Posterior cingulate gyrus (tissue), 11 donors: ENCODE measurements at regions of chr12 and their contacts with region 1.

Region 1: DNA sequence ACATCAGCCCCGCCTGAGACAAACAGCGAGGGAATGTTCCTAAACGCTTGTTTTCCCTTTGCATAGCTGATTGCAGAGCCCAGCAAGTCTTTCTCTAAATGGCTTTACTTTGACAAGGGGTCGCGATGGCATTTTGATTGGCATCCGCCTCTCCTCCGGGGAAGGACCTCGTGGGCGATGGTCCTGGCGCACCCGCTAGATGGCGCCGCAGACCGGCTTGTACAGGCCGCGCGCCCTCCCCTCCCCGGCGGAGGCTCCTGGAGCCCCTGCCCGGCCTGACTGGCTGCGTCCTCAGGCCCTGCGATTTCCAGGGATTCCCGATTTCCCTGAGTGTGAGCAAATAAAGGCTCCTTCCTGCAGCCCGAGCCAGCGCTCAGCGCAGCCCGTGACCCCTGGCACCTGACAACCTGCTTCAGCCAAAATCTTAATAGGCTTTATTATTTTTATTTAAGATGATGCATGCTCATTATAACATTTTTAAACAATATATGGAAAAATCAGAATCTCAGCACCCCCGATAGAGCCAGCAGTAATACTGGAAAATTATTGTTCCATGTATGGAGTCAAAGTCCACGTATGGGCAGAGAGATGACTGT is 468.3 kb downstream of the AACS start:
- DNase-seq: peak; percentile 47 to 97 (median 77)

Region 2: GRCh38 chr12:125183187-125184067 is 350.1 kb before region 1 on chr12:
- intact Hi-C with region 1: loop called (anchors 10 kb)
- DNase-seq: peak; percentile 89 to 99 (median 92)

Region 3: GRCh38 chr12:125455556-125455955 is 78.0 kb before region 1 on chr12:
- intact Hi-C with region 1: loop called (anchors 2 kb)
- DNase-seq: no peak

Region 4: DNA sequence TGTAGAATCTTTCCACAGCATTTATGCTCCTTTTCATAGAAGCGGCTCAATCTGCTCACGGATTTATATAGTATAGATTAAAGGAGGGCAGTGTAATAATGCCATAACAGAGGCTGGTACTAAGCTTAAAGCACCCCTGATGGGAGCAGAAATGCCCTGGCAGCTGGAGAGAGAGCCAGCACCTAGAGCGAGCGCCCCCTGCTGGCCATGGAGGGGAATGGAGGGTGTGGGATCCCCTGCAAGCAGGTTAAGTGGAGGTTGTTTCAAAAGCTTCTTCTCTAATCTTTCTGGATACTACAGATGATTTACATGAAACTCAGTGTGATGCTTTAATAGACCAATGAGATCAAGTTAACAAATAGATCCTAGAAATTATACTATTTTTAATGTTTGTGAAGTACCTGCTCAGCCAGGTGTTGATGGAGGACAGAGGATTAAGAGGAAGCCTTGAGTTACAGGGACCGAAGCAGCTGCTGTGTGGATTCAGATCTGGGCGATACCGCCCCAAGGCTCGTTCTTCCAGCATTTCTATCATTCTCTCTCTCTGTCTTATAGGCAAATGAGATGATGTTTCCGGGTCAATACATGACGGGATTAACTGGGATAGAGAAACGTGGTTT is 1214.1 kb after region 1 on chr12:
- intact Hi-C with region 1: loop called (anchors 2 kb)
- DNase-seq: peak in 9 of 10 donors; percentile 33 to 94 (median 59)